ENCODE measurements at regions of chr15 and their contacts with region 1.

Region 1: GRCh38 chr15:57340682-57341259 is 35.5 kb upstream of the CGNL1 start:
- DNase-seq: peak; percentile 72
- H3K4me3 ChIP-seq: no peak overlapping the region; a peak in 1 of 4 replicates
- H3K27ac ChIP-seq: no peak overlapping the region
- H3K4me1 ChIP-seq: peaks cover 2 to 4% of the 10 kb centered on the region in 2 experiments; a peak in 2 of 4 replicates
- H3K27me3 ChIP-seq: no peaks in the 10 kb centered on the region
- CTCF ChIP-seq: peak; percentile 92
- EP300 ChIP-seq: no peak
- RAD21 ChIP-seq: peak; percentile 98

Region 2: DNA sequence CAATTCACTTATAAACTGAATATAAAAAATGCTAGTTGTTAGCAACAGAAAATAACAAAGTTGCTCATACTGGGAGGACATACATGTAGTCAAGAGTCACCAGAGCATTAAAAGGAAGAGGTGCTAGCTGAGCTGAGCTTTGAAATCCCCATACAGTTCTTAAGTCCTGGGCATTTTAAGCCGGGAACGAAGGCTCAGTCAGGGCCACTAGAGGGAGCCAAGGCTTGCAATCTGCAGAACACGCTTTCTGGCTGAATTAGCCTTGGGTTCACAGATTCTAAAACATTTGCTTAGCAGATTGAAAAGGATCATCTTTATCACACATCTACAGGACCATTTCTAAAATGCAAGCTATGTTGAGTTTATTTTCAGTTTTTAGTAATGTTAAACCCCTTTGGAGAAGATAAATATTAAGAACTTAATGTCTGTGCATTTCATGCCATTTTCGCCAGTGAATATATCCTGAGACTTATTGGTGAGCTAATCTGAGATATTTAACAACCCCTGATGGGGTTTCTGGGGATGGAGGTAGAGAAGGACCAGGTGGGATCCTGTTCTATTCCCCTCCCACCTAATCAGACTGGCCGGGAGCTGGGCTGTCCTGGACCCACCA is 849.6 kb before region 1 on chr15:
- CTCF ChIA-PET with region 1: interaction called, 12 read pairs
- POLR2A ChIA-PET with region 1: no interaction called
- DNase-seq: peak; percentile 71
- H3K4me3 ChIP-seq: no peak overlapping the region
- H3K27ac ChIP-seq: no peak overlapping the region
- H3K4me1 ChIP-seq: no peaks in the 10 kb centered on the region
- H3K27me3 ChIP-seq: no peaks in the 10 kb centered on the region
- CTCF ChIP-seq: peak; percentile 94
- EP300 ChIP-seq: no peak
- RAD21 ChIP-seq: peak; percentile 80

Region 3: GRCh38 chr15:56821721-56822425 is 518.9 kb before region 1 on chr15:
- CTCF ChIA-PET with region 1: no interaction called
- POLR2A ChIA-PET with region 1: no interaction called
- DNase-seq: peak; percentile 42
- H3K4me3 ChIP-seq: no peak overlapping the region
- H3K27ac ChIP-seq: no peak overlapping the region
- H3K4me1 ChIP-seq: peaks cover 10 to 20% of the 10 kb centered on the region in 2 experiments; a peak in 3 of 4 replicates
- H3K27me3 ChIP-seq: no peaks in the 10 kb centered on the region
- CTCF ChIP-seq: peak; percentile 79
- EP300 ChIP-seq: no peak
- RAD21 ChIP-seq: peak; percentile 88

Region 4: GRCh38 chr15:57003418-57003817 is 337.4 kb before region 1 on chr15:
- CTCF ChIA-PET with region 1: no interaction called
- POLR2A ChIA-PET with region 1: no interaction called
- DNase-seq: no peak
- H3K4me3 ChIP-seq: no peak overlapping the region
- H3K27ac ChIP-seq: peak overlapping the region in 1 of 2 experiments; percentile 9; a peak in 1 of 4 replicates
- H3K4me1 ChIP-seq: peaks cover 0 to 7% of the 10 kb centered on the region in 2 experiments; a peak in 1 of 4 replicates
- H3K27me3 ChIP-seq: no peaks in the 10 kb centered on the region
- CTCF ChIP-seq: no peak
- EP300 ChIP-seq: no peak
- RAD21 ChIP-seq: no peak

Region 5: GRCh38 chr15:57356636-57357035 is 15.9 kb after region 1 on chr15:
- CTCF ChIA-PET with region 1: interaction called, 60 read pairs
- POLR2A ChIA-PET with region 1: no interaction called
- DNase-seq: no peak
- H3K4me3 ChIP-seq: no peak overlapping the region
- H3K27ac ChIP-seq: no peak overlapping the region
- H3K4me1 ChIP-seq: peaks cover 0 to 2% of the 10 kb centered on the region in 2 experiments; a peak in 2 of 4 replicates
- H3K27me3 ChIP-seq: no peaks in the 10 kb centered on the region
- CTCF ChIP-seq: no peak
- EP300 ChIP-seq: no peak
- RAD21 ChIP-seq: no peak

Region 6: GRCh38 chr15:57427367-57427821 is 86.6 kb after region 1 on chr15:
- CTCF ChIA-PET with region 1: interaction called, 10 read pairs
- POLR2A ChIA-PET with region 1: no interaction called
- DNase-seq: no peak
- H3K4me3 ChIP-seq: no peak overlapping the region
- H3K27ac ChIP-seq: no peak overlapping the region
- H3K4me1 ChIP-seq: peaks cover 0 to 5% of the 10 kb centered on the region in 2 experiments; a peak in 1 of 4 replicates
- H3K27me3 ChIP-seq: no peaks in the 10 kb centered on the region
- CTCF ChIP-seq: no peak
- EP300 ChIP-seq: no peak
- RAD21 ChIP-seq: no peak

Region 7: GRCh38 chr15:57493351-57493750 is 152.6 kb after region 1 on chr15:
- CTCF ChIA-PET with region 1: interaction called, 12 read pairs
- POLR2A ChIA-PET with region 1: no interaction called
- DNase-seq: no peak
- H3K4me3 ChIP-seq: no peak overlapping the region
- H3K27ac ChIP-seq: no peak overlapping the region
- H3K4me1 ChIP-seq: peaks cover 0 to 14% of the 10 kb centered on the region in 2 experiments; a peak in 1 of 4 replicates
- H3K27me3 ChIP-seq: no peaks in the 10 kb centered on the region
- CTCF ChIP-seq: no peak
- EP300 ChIP-seq: no peak
- RAD21 ChIP-seq: no peak

Region 8: GRCh38 chr15:57527382-57528091 is 186.8 kb after region 1 on chr15:
- CTCF ChIA-PET with region 1: interaction called, 447 read pairs
- POLR2A ChIA-PET with region 1: interaction called, 5 read pairs
- DNase-seq: peak; percentile 51
- H3K4me3 ChIP-seq: no peak overlapping the region
- H3K27ac ChIP-seq: no peak overlapping the region
- H3K4me1 ChIP-seq: peaks cover 0 to 10% of the 10 kb centered on the region in 2 experiments; a peak in 1 of 4 replicates
- H3K27me3 ChIP-seq: no peaks in the 10 kb centered on the region
- CTCF ChIP-seq: peak; percentile 71
- EP300 ChIP-seq: no peak
- RAD21 ChIP-seq: peak; percentile 95

Region 9: GRCh38 chr15:57551717-57552677 is 211.2 kb after region 1 on chr15:
- CTCF ChIA-PET with region 1: interaction called, 11 read pairs
- POLR2A ChIA-PET with region 1: no interaction called
- DNase-seq: no peak
- H3K4me3 ChIP-seq: no peak overlapping the region
- H3K27ac ChIP-seq: peak overlapping the region; percentile 69 to 72
- H3K4me1 ChIP-seq: peaks cover 25 to 35% of the 10 kb centered on the region in 2 experiments; a peak in 3 of 4 replicates
- H3K27me3 ChIP-seq: no peaks in the 10 kb centered on the region
- CTCF ChIP-seq: no peak
- EP300 ChIP-seq: peak; percentile 16 to 76; a peak in 2 of 4 replicates
- RAD21 ChIP-seq: no peak

Region 10: GRCh38 chr15:57727031-57727430 is 386.3 kb after region 1 on chr15:
- CTCF ChIA-PET with region 1: no interaction called
- POLR2A ChIA-PET with region 1: no interaction called
- DNase-seq: no peak
- H3K4me3 ChIP-seq: no peak overlapping the region
- H3K27ac ChIP-seq: no peak overlapping the region
- H3K4me1 ChIP-seq: peaks cover 0 to 2% of the 10 kb centered on the region in 2 experiments; a peak in 1 of 4 replicates
- H3K27me3 ChIP-seq: no peaks in the 10 kb centered on the region
- CTCF ChIP-seq: no peak
- EP300 ChIP-seq: no peak
- RAD21 ChIP-seq: no peak

Measured in SK-N-SH (cell line).